CD8-positive, alpha-beta T cell (primary cell): ENCODE measurements at regions of chr10 and their contacts with region 1.

Region 1: DNA sequence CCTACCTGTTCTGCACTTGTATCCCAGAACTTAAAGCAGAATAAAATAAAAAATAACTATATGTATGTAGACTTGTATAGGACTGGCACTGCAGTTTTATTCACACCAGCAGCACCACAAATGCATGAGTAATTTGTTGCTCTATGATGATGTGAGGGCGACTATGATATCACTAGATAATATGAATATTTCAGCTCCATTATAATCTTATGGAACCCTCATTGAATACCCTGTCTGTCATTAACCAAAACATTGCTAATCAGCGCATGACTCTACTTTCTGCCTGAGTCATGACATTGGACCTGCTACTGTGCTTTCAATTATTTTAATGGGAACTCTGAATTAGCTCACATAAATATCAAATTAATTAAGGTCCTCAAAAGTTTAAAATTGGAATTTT is 129.4 kb upstream of the RHOBTB1 start:
- DNase-seq: no peak
- ATAC-seq: no peak
- H3K4me3 ChIP-seq: no peak overlapping the region
- H3K4me3 Mint-ChIP-seq: no peak overlapping the region
- H3K27ac ChIP-seq: no peak overlapping the region
- H3K27ac Mint-ChIP-seq: no peak overlapping the region
- H3K4me1 ChIP-seq: no peaks in the 10 kb centered on the region
- H3K4me1 Mint-ChIP-seq: no peaks in the 10 kb centered on the region
- H3K27me3 ChIP-seq: no peaks in the 10 kb centered on the region
- H3K27me3 Mint-ChIP-seq: no peaks in the 10 kb centered on the region
- CTCF ChIP-seq: no peak

Region 2: GRCh38 chr10:61356342-61356741 is 283.0 kb after region 1 on chr10:
- CTCF ChIA-PET with region 1: no interaction called
- POLR2A ChIA-PET with region 1: no interaction called
- intact Hi-C with region 1: no loop called
- DNase-seq: no peak
- ATAC-seq: no peak
- H3K4me3 ChIP-seq: no peak overlapping the region
- H3K4me3 Mint-ChIP-seq: no peak overlapping the region
- H3K27ac ChIP-seq: no peak overlapping the region
- H3K27ac Mint-ChIP-seq: no peak overlapping the region
- H3K4me1 ChIP-seq: no peaks in the 10 kb centered on the region
- H3K4me1 Mint-ChIP-seq: no peaks in the 10 kb centered on the region
- H3K27me3 ChIP-seq: no peaks in the 10 kb centered on the region
- H3K27me3 Mint-ChIP-seq: peaks cover 2% of the 10 kb centered on the region
- CTCF ChIP-seq: no peak

Region 3: GRCh38 chr10:61835069-61835945 is 761.9 kb after region 1 on chr10:
- CTCF ChIA-PET with region 1: no interaction called
- POLR2A ChIA-PET with region 1: no interaction called
- intact Hi-C with region 1: loop called in 1 of 2 experiments (anchors 5 kb)
- DNase-seq: peak in 2 of 9 experiments; percentile 26 to 37
- ATAC-seq: no peak
- H3K4me3 ChIP-seq: no peak overlapping the region
- H3K4me3 Mint-ChIP-seq: no peak overlapping the region
- H3K27ac ChIP-seq: no peak overlapping the region
- H3K27ac Mint-ChIP-seq: no peak overlapping the region
- H3K4me1 ChIP-seq: no peaks in the 10 kb centered on the region
- H3K4me1 Mint-ChIP-seq: no peaks in the 10 kb centered on the region
- H3K27me3 ChIP-seq: no peaks in the 10 kb centered on the region
- H3K27me3 Mint-ChIP-seq: no peaks in the 10 kb centered on the region
- CTCF ChIP-seq: no peak